ENCODE measurements at regions of chr4 and their contacts with region 1.

Region 1: GRCh38 chr4:38759113-38759789 is 23.5 kb downstream of the TLR10 start:
- DNase-seq: peak; percentile 77
- ATAC-seq: peak; percentile 85
- H3K4me3 Mint-ChIP-seq: no peak overlapping the region
- H3K27ac Mint-ChIP-seq: no peak overlapping the region
- H3K4me1 Mint-ChIP-seq: peaks cover 15% of the 10 kb centered on the region
- H3K27me3 Mint-ChIP-seq: no peaks in the 10 kb centered on the region

Region 2: GRCh38 chr4:38634047-38634759 is 125.0 kb before region 1 on chr4:
- CTCF ChIA-PET with region 1: no interaction called
- POLR2A ChIA-PET with region 1: no interaction called
- intact Hi-C with region 1: no loop called
- DNase-seq: no peak
- ATAC-seq: no peak
- H3K4me3 Mint-ChIP-seq: no peak overlapping the region
- H3K27ac Mint-ChIP-seq: no peak overlapping the region
- H3K4me1 Mint-ChIP-seq: no peaks in the 10 kb centered on the region
- H3K27me3 Mint-ChIP-seq: no peaks in the 10 kb centered on the region

Region 3: DNA sequence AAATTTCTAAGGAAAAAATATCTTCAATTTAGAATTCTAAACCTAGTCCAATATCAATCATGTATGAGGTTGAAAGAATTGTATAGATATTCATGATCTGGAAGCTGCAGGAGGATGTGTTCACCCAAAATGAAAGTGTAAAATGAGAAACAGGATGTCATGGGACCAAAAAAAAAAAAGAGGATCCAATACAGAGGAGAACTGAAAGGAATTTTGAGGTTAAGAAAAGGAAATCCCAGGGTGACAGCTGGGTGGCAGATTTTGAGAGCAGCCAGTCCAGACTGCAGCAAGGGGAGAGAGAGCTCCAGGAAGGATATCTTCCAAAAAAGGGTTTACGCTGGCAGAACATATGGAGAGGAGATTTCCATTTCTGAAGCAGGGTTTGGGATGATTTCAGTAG is 15.4 kb before region 1 on chr4:
- CTCF ChIA-PET with region 1: interaction called, 13 read pairs
- POLR2A ChIA-PET with region 1: no interaction called
- intact Hi-C with region 1: no loop called
- DNase-seq: no peak
- ATAC-seq: no peak
- H3K4me3 Mint-ChIP-seq: no peak overlapping the region
- H3K27ac Mint-ChIP-seq: no peak overlapping the region
- H3K4me1 Mint-ChIP-seq: peaks cover 5% of the 10 kb centered on the region
- H3K27me3 Mint-ChIP-seq: no peaks in the 10 kb centered on the region

Region 4: GRCh38 chr4:38774181-38774955 is 15.1 kb after region 1 on chr4:
- CTCF ChIA-PET with region 1: interaction called, 20 read pairs
- POLR2A ChIA-PET with region 1: no interaction called
- intact Hi-C with region 1: no loop called
- DNase-seq: no peak
- ATAC-seq: no peak
- H3K4me3 Mint-ChIP-seq: no peak overlapping the region
- H3K27ac Mint-ChIP-seq: no peak overlapping the region
- H3K4me1 Mint-ChIP-seq: no peaks in the 10 kb centered on the region
- H3K27me3 Mint-ChIP-seq: peaks cover 2% of the 10 kb centered on the region

Region 5: DNA sequence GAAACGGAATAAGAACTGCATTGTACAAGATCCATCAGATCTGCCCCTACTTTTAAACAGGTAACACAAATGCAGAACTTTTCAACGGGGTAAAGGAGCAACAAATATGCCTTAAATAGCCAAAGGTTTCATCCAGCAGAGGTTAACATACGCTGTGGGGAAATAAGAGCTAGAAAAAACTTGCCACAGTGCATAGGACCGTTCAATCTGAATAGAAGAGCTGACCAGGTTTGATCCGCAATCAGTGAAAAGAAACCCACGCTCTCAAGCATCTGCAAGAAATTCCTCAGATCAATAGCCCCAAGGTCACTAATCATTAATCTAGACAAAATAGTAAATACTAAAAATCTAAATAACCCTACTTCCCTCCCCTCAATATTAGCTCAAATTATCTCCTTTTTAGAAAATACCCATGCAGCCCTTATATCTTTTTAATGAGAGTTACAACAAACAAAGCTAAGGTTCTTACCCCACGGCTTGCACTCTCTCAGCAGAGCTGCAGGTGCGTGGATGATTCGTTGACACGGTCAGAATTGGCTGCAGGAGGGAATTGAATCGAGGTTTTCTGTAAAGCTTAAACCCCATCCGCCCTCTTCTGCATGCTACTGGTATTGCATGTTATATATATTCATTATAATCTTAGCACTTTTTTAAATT is 23.3 kb after region 1 on chr4 and contains the start of gene TLR10:
- CTCF ChIA-PET with region 1: interaction called, 99 read pairs
- POLR2A ChIA-PET with region 1: interaction called, 3 read pairs
- intact Hi-C with region 1: loop called in 1 of 2 experiments (anchors 1 kb)
- DNase-seq: peak; percentile 37
- ATAC-seq: peak; percentile 63
- H3K4me3 Mint-ChIP-seq: no peak within 1 kb of the TSS
- H3K27ac Mint-ChIP-seq: no peak within 1 kb of the TSS
- H3K4me1 Mint-ChIP-seq: peaks cover 5% of the 10 kb centered on the region
- H3K27me3 Mint-ChIP-seq: no peaks in the 10 kb centered on the region
- total RNA-seq, gene TLR10: not detected

Region 6: DNA sequence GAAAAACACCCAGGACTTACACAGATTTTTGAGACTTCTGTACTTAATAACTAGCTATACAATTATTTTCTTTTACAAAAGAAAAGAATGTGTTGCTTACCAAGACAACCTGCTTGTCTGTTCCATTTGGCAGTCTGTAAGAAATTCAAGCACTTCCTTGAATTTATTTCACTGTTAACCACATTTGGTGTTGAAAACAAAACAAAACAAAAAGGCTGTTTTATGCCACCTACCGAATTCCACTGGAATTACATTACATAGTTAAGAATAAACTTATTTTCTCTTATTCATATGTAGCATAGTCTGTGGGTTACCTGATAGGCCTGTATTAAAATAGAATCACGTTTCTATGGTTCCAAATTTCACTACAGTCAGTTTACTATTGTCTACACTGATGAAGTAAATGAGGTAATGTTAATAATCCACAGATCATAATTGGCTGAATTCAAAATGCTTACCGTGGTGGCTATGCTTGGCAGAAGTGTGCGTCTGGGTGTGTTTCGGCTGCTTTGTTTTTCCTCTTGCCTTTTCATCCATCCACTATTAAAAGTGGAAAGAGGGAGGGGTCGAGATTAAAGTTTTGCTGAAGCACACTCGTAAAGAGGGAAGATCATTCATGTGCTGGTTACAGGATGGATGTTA is 45.5 kb after region 1 on chr4 and contains the start of gene TLR1:
- CTCF ChIA-PET with region 1: interaction called, 41 read pairs
- POLR2A ChIA-PET with region 1: no interaction called
- intact Hi-C with region 1: loop called (anchors 1 to 2 kb)
- DNase-seq: no peak
- ATAC-seq: peak; percentile 82
- H3K4me3 Mint-ChIP-seq: peak within 1 kb of the TSS; percentile 64
- H3K27ac Mint-ChIP-seq: peak within 1 kb of the TSS; percentile 88
- H3K4me1 Mint-ChIP-seq: peaks cover 24% of the 10 kb centered on the region
- H3K27me3 Mint-ChIP-seq: no peaks in the 10 kb centered on the region
- total RNA-seq, gene TLR1: 1.5 to 1.7 TPM

Region 7: DNA sequence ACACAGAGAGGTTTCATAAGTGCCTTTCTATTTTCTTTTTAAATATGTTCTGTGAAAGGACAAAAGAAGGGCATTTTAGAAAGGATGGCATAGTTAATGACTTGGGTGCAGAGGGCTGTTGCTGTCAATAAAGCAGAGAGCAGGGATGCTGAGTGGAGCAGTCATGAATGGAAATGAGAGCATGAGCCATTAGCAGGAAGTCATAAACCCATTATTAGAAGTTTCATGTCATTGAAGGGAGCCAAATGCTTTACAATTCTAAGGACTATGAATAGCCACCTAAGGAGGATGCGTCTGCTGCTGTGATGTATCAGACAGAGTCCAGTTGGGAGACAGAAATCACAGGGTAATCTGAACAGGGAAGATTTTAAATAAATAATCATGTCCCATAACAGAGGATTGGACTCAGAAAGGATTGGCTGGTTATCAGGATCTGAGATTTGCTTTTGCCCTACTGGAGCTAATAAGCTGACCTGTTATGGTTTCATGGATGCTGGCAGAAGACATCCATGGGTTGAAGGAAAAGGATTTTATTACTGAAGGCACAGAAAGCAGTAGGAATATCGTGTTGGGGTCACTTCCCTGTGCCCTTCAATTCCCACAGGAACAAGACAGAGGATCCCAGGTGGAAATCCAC is 375.6 kb after region 1 on chr4:
- CTCF ChIA-PET with region 1: interaction called, 20 read pairs
- POLR2A ChIA-PET with region 1: no interaction called
- intact Hi-C with region 1: loop called (anchors 1 to 5 kb)
- DNase-seq: no peak
- ATAC-seq: no peak
- H3K4me3 Mint-ChIP-seq: no peak overlapping the region
- H3K27ac Mint-ChIP-seq: no peak overlapping the region
- H3K4me1 Mint-ChIP-seq: peaks cover 9% of the 10 kb centered on the region
- H3K27me3 Mint-ChIP-seq: no peaks in the 10 kb centered on the region